Left lung (tissue), 14 donors: ENCODE measurements at regions of chr12 and their contacts with region 1.

Region 1: GRCh38 chr12:8544295-8544694 is 3.6 kb upstream of the CLEC4E start:
- DNase-seq: peak; percentile 41 to 68 (median 64)
- ATAC-seq: peak; percentile 93
- H3K4me3 ChIP-seq: no peak overlapping the region
- H3K27ac ChIP-seq: no peak overlapping the region
- H3K4me1 ChIP-seq: peaks cover 0 to 41% of the 10 kb centered on the region in 2 donors
- H3K27me3 ChIP-seq: no peaks in the 10 kb centered on the region
- CTCF ChIP-seq: peak; percentile 83 to 97

Region 2: GRCh38 chr12:8584004-8584403 is 39.7 kb after region 1 on chr12:
- intact Hi-C with region 1: no loop called
- DNase-seq: no peak
- ATAC-seq: no peak
- H3K4me3 ChIP-seq: no peak overlapping the region
- H3K27ac ChIP-seq: no peak overlapping the region
- H3K4me1 ChIP-seq: no peaks in the 10 kb centered on the region
- H3K27me3 ChIP-seq: no peaks in the 10 kb centered on the region
- CTCF ChIP-seq: no peak

Region 3: GRCh38 chr12:8609061-8609570 is 64.8 kb after region 1 on chr12:
- intact Hi-C with region 1: loop called in 1 of 2 experiments (anchors 10 kb)
- DNase-seq: peak in 2 of 4 donors; percentile 18 to 37
- ATAC-seq: peak; percentile 82
- H3K4me3 ChIP-seq: no peak overlapping the region
- H3K27ac ChIP-seq: no peak overlapping the region
- H3K4me1 ChIP-seq: peaks cover 0 to 9% of the 10 kb centered on the region in 2 donors
- H3K27me3 ChIP-seq: peaks cover 0 to 12% of the 10 kb centered on the region in 2 donors
- CTCF ChIP-seq: peak; percentile 59 to 71